B cell (primary cell): ENCODE measurements at regions of chr11 and their contacts with region 1.

Region 1: DNA sequence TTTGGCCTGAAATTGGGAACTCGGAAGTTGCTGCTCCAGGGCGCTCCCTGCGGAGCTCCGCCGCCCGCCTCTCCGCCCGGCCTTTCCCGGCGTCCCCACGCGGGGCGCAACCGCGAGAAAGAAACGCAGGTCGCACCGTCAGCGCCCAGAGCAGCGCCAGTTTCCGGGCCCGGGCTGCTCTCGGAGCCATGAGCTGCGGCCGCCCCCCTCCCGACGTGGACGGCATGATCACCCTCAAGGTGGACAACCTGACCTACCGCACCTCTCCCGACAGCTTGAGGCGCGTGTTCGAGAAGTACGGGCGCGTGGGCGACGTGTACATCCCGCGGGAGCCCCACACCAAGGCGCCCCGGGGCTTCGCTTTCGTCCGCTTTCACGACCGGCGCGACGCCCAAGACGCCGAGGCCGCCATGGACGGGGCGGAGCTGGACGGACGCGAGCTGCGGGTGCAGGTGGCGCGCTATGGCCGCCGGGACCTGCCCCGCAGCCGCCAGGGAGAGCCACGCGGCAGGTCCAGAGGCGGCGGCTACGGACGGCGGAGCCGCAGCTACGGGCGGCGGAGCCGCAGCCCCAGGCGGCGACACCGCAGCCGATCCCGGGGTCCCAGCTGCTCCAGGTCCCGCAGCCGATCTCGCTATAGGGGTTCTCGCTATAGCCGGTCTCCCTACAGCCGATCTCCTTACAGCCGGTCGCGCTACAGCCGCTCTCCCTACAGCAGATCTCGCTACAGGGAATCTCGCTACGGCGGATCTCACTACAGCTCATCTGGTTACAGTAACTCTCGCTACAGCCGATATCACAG is 521 bp downstream of the SRSF8 start:
- DNase-seq: peak; percentile 88
- ATAC-seq: peak; percentile 78
- H3K4me3 ChIP-seq: peak overlapping the region; percentile 70 to 95 (median 93)
- H3K4me3 Mint-ChIP-seq: peak overlapping the region; percentile 100
- H3K27ac ChIP-seq: peak overlapping the region; percentile 78 to 87
- H3K27ac Mint-ChIP-seq: peak overlapping the region; percentile 100
- H3K4me1 ChIP-seq: peaks cover 14 to 22% of the 10 kb centered on the region in 2 donors
- H3K4me1 Mint-ChIP-seq: peaks cover 26% of the 10 kb centered on the region
- H3K27me3 ChIP-seq: no peaks in the 10 kb centered on the region
- H3K27me3 Mint-ChIP-seq: no peaks in the 10 kb centered on the region
- CTCF ChIP-seq: peak; percentile 52

Region 2: DNA sequence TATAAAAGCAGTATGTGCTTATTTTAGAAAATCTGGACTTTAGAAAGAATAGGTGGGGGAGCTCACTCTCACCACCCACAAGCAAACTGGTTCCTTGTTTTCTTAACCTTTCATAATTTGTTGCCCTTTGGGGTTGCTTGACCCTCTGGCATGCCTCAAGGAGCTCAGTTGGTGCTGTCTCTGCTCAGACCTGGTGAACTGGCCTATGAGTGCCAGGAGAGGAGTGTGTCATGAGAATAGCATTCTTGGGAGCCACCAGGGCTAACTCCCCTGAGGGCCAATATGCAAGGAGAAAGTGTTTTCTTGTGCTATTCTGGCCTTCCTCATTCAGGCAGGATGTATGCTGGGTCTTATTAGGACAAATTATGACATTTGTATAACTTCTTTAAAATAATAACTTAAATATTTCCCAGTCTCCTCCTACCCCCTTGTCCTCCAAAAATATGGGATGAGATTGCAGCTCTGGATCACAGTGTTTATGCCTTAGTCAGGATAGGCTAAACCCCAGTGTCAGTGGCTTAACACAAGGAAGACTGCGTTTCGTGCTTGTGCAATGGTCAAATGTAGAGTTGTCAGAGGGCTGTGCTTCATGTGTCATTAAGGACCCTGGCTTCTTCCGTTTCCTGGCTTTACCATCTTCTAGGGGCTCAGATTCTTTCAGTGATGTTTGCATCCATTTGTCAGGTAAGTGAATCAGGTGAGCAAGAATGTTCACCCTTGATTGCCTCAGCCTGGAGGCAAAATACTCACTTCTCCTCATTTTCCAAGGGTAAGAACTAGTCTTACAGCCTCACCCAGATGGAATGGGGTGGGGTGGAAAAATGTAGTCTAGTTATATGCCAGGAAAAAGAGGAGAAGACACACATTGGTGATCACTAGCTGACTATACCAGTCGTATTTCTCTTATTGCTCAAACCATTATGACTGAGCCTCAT is 319.8 kb before region 1 on chr11:
- CTCF ChIA-PET with region 1: no interaction called
- POLR2A ChIA-PET with region 1: no interaction called
- intact Hi-C with region 1: no loop called
- DNase-seq: no peak
- ATAC-seq: no peak
- H3K4me3 ChIP-seq: no peak overlapping the region
- H3K4me3 Mint-ChIP-seq: no peak overlapping the region
- H3K27ac ChIP-seq: no peak overlapping the region
- H3K27ac Mint-ChIP-seq: no peak overlapping the region
- H3K4me1 ChIP-seq: no peaks in the 10 kb centered on the region
- H3K4me1 Mint-ChIP-seq: no peaks in the 10 kb centered on the region
- H3K27me3 ChIP-seq: peaks cover 0 to 18% (median 9%) of the 10 kb centered on the region in 4 experiments
- H3K27me3 Mint-ChIP-seq: peaks cover 66% of the 10 kb centered on the region
- CTCF ChIP-seq: no peak

Region 3: DNA sequence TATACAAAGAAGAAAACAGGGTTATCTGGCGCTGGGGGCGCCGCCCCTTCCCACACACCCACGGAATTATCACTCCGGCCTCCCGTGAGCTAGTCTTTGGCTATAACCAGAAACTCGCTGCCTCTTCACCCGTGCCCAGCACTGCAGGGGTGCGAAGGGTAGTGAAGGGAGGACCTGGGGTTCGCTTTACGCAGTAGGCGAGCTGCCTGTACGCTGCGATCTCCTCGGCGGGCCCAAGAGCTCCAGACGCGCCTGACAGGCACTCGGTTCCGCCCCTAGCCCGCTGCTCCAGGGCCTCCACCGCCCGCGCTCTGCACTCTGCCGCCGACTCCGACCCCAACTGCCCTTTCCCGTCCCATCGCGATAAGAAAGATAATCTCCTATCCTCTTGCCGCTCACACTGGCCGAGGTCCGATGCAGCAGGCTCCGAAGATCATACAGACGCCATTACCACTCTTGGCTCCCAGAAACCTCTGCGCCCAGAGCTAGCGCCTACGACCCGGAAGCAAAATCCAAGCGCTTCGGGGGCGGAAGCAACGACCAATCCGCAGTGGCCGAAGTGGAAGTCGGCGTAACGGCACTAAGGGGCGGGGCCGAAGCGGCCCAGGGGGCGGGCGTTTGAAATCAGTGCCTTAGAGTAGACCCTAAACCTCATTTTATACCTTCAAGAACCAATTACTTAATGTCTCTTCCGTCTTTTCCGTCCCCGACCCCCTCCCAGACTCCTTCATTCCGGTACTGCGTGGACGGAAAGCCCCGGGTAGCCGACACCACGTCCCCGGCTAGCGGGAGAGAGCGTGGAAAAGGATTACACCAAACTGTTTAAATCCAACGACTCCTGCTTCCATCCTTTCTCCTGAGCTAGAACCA is 93.9 kb before region 1 on chr11 and contains the starts of genes CWC15 and KDM4D:
- CTCF ChIA-PET with region 1: interaction called, 14 read pairs
- POLR2A ChIA-PET with region 1: interaction called, 6 read pairs
- intact Hi-C with region 1: loop called (anchors 1 kb)
- DNase-seq: peak; percentile 94
- ATAC-seq: peak; percentile 100
- H3K4me3 ChIP-seq: peak within 1 kb of the TSS; percentile 75 to 97 (median 87)
- H3K4me3 Mint-ChIP-seq: peak within 1 kb of the TSS; percentile 92
- H3K27ac ChIP-seq: peak within 1 kb of the TSS; percentile 74 to 83
- H3K27ac Mint-ChIP-seq: peak within 1 kb of the TSS; percentile 94
- H3K4me1 ChIP-seq: peaks cover 10 to 14% of the 10 kb centered on the region in 2 donors
- H3K4me1 Mint-ChIP-seq: peaks cover 13% of the 10 kb centered on the region
- H3K27me3 ChIP-seq: no peaks in the 10 kb centered on the region
- H3K27me3 Mint-ChIP-seq: no peaks in the 10 kb centered on the region
- CTCF ChIP-seq: no peak
- total RNA-seq, gene CWC15: 59.5 and 59.8 TPM in 2 replicates
- total RNA-seq, gene KDM4D: 0.44 and 0.73 TPM in 2 replicates

Region 4: DNA sequence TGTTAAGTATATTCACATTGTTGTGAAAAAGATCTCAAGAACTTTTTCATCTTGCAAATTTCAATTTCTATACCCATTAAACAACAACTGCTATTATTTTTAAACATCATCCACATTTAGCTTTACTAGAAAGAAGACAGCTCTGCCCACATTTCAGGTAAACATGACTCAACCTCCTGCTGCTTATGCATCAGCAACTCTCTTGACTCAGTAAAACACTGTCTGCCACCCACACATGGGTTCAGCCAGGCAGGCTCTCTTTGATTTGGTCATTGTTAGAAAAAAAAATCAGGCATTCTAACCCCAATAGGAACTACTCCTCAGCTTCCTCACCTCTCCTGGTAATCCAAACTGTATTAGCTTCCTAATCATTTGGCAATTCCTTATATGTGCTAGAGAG is 17.3 kb after region 1 on chr11:
- CTCF ChIA-PET with region 1: interaction called, 96 read pairs
- POLR2A ChIA-PET with region 1: interaction called, 46 read pairs
- intact Hi-C with region 1: loop called (anchors 1 kb)
- DNase-seq: no peak
- ATAC-seq: no peak
- H3K4me3 ChIP-seq: no peak overlapping the region
- H3K4me3 Mint-ChIP-seq: no peak overlapping the region
- H3K27ac ChIP-seq: no peak overlapping the region
- H3K27ac Mint-ChIP-seq: no peak overlapping the region
- H3K4me1 ChIP-seq: peaks cover 8 to 10% of the 10 kb centered on the region in 2 donors
- H3K4me1 Mint-ChIP-seq: peaks cover 13% of the 10 kb centered on the region
- H3K27me3 ChIP-seq: no peaks in the 10 kb centered on the region
- H3K27me3 Mint-ChIP-seq: no peaks in the 10 kb centered on the region
- CTCF ChIP-seq: no peak

Region 5: GRCh38 chr11:95095858-95096587 is 28.8 kb after region 1 on chr11:
- CTCF ChIA-PET with region 1: interaction called, 96 read pairs
- POLR2A ChIA-PET with region 1: interaction called, 5 read pairs
- intact Hi-C with region 1: loop called (anchors 1 kb)
- DNase-seq: peak; percentile 54
- ATAC-seq: peak; percentile 86
- H3K4me3 ChIP-seq: peak overlapping the region in 1 of 5 experiments; percentile 0
- H3K4me3 Mint-ChIP-seq: peak overlapping the region; percentile 44
- H3K27ac ChIP-seq: peak overlapping the region; percentile 31 to 54
- H3K27ac Mint-ChIP-seq: peak overlapping the region; percentile 76
- H3K4me1 ChIP-seq: peaks cover 71 to 73% of the 10 kb centered on the region in 2 donors
- H3K4me1 Mint-ChIP-seq: peaks cover 86% of the 10 kb centered on the region
- H3K27me3 ChIP-seq: no peaks in the 10 kb centered on the region
- H3K27me3 Mint-ChIP-seq: no peaks in the 10 kb centered on the region
- CTCF ChIP-seq: no peak

Region 6: GRCh38 chr11:95764267-95764898 is 697.1 kb after region 1 on chr11:
- CTCF ChIA-PET with region 1: interaction called, 8 read pairs
- POLR2A ChIA-PET with region 1: no interaction called
- intact Hi-C with region 1: loop called (anchors 1 kb)
- DNase-seq: peak; percentile 78
- ATAC-seq: peak; percentile 92
- H3K4me3 ChIP-seq: no peak overlapping the region
- H3K4me3 Mint-ChIP-seq: no peak overlapping the region
- H3K27ac ChIP-seq: no peak overlapping the region
- H3K27ac Mint-ChIP-seq: no peak overlapping the region
- H3K4me1 ChIP-seq: peaks cover 7% of the 10 kb centered on the region in 2 donors
- H3K4me1 Mint-ChIP-seq: peaks cover 24% of the 10 kb centered on the region
- H3K27me3 ChIP-seq: no peaks in the 10 kb centered on the region
- H3K27me3 Mint-ChIP-seq: no peaks in the 10 kb centered on the region
- CTCF ChIP-seq: peak; percentile 92

Region 7: GRCh38 chr11:96389720-96390487 is 1322.7 kb after region 1 on chr11 and contains the starts of genes CCDC82 and JRKL:
- CTCF ChIA-PET with region 1: no interaction called
- POLR2A ChIA-PET with region 1: no interaction called
- intact Hi-C with region 1: loop called (anchors 1 kb)
- DNase-seq: peak; percentile 96
- ATAC-seq: peak; percentile 99
- H3K4me3 ChIP-seq: peak within 1 kb of the TSS; percentile 77 to 89 (median 84)
- H3K4me3 Mint-ChIP-seq: peak within 1 kb of the TSS; percentile 93
- H3K27ac ChIP-seq: peak within 1 kb of the TSS; percentile 82 to 83
- H3K27ac Mint-ChIP-seq: peak within 1 kb of the TSS; percentile 95
- H3K4me1 ChIP-seq: peaks cover 13 to 18% of the 10 kb centered on the region in 2 donors
- H3K4me1 Mint-ChIP-seq: peaks cover 26% of the 10 kb centered on the region
- H3K27me3 ChIP-seq: no peaks in the 10 kb centered on the region
- H3K27me3 Mint-ChIP-seq: no peaks in the 10 kb centered on the region
- CTCF ChIP-seq: no peak
- total RNA-seq, gene CCDC82: 34.1 and 37.9 TPM in 2 replicates
- total RNA-seq, gene JRKL: 12.5 and 12.9 TPM in 2 replicates